Ascending aorta (tissue), 2 donors: ENCODE measurements at regions of chr2 and their contacts with region 1.

Region 1: GRCh38 chr2:30565851-30566358 is 118.9 kb downstream of the LCLAT1 start:
- DNase-seq: no peak
- H3K4me3 ChIP-seq: no peak overlapping the region
- H3K27ac ChIP-seq: peak overlapping the region; percentile 61 to 73
- H3K4me1 ChIP-seq: peaks cover 0 to 10% of the 10 kb centered on the region in 2 donors
- H3K27me3 ChIP-seq: no peaks in the 10 kb centered on the region
- CTCF ChIP-seq: no peak

Region 2: GRCh38 chr2:30487603-30488002 is 78.3 kb before region 1 on chr2:
- intact Hi-C with region 1: loop called (anchors 5 kb)
- DNase-seq: no peak
- H3K4me3 ChIP-seq: no peak overlapping the region
- H3K27ac ChIP-seq: no peak overlapping the region
- H3K4me1 ChIP-seq: peaks cover 0 to 21% of the 10 kb centered on the region in 2 donors
- H3K27me3 ChIP-seq: no peaks in the 10 kb centered on the region
- CTCF ChIP-seq: no peak

Region 3: DNA sequence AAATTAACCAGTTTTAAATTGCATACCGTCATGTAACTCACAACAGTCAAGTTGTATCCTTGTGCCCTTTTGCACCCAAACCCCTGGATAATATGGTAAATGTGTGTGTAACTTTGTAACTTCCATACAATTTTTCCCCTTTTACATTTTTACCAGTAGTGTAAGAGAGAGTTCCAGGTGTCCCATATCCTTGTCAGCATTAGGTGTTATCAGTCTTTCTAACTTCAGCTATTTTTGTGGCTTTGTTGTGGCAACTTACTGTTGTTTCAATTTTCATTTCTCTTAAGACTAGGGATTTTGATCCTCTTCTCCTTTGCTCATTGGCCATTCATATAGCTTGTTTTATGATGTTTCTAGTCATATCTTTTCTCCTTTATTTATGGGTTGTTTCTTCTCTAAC is 24.2 kb before region 1 on chr2:
- intact Hi-C with region 1: no loop called
- DNase-seq: no peak
- H3K4me3 ChIP-seq: no peak overlapping the region
- H3K27ac ChIP-seq: no peak overlapping the region
- H3K4me1 ChIP-seq: peaks cover 0 to 2% of the 10 kb centered on the region in 2 donors
- H3K27me3 ChIP-seq: no peaks in the 10 kb centered on the region
- CTCF ChIP-seq: no peak